ENCODE measurements at regions of chr2 and their contacts with region 1.

Region 1: GRCh38 chr2:113068718-113069435 is 1.1 kb downstream of the IL1F10 start:
- DNase-seq: no peak
- H3K4me3 ChIP-seq: no peak overlapping the region
- CTCF ChIP-seq: no peak

Region 2: DNA sequence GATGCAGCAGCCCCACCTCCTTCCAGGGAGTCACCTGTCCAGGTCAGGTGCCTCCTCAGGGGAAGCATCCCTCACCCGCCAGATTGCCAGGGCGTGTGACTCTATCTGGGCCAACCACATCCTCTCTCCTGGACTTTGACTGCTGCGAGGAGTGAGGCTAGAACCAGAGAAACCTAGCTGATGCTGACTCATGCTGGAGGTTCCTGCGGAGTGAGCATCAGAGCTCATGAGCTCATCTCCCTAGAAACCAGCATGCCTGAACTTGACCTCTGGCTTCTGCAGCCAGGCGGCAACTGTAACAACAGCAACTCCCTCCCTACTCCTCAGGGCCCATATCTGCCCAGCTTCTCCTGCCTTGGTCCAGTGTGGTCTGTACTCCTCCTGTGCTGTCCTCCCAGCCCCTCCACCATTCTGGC is 376.4 kb before region 1 on chr2:
- CTCF ChIA-PET with region 1: no interaction called
- POLR2A ChIA-PET with region 1: no interaction called
- DNase-seq: peak; percentile 63
- H3K4me3 ChIP-seq: no peak overlapping the region
- CTCF ChIP-seq: no peak

Region 3: GRCh38 chr2:113080134-113080533 is 11.3 kb after region 1 on chr2:
- CTCF ChIA-PET with region 1: interaction called, 20 read pairs
- POLR2A ChIA-PET with region 1: no interaction called
- DNase-seq: no peak
- H3K4me3 ChIP-seq: no peak overlapping the region
- CTCF ChIP-seq: peak; percentile 70

Measured in AG04449 (cell line).